Activated CD4-positive, alpha-beta T cell treated with anti-CD3 and anti-CD28 coated beads, Interleukin-2, amount 10 ng/mL, durations not matched to agents 24 days and 14 days (primary cell): ENCODE measurements at regions of chr13 and their contacts with region 1.

Region 1: DNA sequence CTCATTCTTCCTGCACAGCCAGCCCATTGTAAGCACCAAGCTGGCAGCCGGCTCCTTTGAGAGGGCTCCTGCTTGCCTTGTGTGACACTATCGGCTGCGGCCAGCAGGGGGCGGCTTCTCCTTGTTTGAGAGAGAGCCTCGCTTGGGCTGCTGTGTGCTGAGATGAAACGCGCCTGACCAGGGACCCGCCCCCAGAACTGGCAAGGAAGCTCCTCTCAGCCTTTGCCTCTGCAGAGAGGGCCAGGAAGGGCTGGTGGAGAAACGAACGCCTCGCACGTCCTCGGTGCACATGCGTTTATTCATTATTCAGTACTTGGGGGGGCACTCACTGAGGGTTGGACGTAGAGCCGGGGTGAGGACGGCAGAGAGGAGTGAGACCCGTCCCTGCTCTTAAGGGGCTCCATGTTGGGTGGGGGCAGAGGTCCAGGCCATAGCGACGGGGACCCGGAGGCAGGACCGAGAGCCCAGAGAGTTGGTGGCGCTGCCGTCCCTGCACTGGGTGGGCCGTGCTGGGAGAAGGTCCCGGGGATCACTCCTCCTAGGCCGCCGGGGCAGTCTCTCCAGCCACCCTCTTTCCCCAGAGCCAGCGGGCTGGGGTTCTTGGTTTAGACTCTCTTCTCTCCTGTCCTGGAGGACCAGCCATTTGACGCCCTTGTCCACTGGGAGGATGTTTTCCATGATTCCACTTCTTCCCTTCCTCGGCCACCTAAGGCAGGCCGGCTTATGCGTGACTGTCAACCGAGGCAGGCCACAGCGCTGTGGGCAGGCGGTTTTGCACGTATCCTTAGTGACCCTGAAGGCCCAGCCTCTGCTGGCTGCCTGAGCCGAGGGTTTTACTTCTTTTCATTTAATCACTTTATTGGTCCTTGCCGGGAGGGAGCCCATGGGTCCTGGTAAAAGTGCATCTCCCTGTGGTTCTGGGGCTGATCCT is 174.5 kb downstream of the KATNAL1 start:
- DNase-seq: peak; percentile 99
- H3K4me3 Mint-ChIP-seq: peak overlapping the region; percentile 19
- H3K27ac Mint-ChIP-seq: peak overlapping the region; percentile 59
- H3K4me1 Mint-ChIP-seq: peaks cover 19% of the 10 kb centered on the region
- H3K27me3 Mint-ChIP-seq: no peaks in the 10 kb centered on the region

Region 2: DNA sequence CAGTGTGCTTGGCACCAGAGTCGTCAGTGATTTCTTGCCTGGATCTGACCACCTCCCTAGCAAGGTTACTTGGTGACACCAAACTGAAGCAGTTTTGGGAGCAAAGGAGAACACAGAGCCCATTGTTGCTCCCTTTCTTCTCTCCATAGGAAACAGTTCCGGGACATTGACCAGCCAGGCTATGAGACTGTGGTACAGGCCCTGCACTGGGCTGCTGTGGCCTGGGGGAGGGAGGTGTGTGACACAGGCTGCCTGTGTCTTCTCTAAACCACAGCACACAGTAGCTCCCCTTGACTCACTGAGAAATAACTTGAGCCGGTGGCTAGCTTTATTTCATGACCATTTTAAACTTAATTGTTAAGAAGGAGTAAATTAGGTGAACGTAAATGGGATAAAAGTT is 67.7 kb before region 1 on chr13:
- intact Hi-C with region 1: no loop called
- DNase-seq: no peak
- H3K4me3 Mint-ChIP-seq: no peak overlapping the region
- H3K27ac Mint-ChIP-seq: no peak overlapping the region
- H3K4me1 Mint-ChIP-seq: no peaks in the 10 kb centered on the region
- H3K27me3 Mint-ChIP-seq: peaks cover 10% of the 10 kb centered on the region

Region 3: GRCh38 chr13:30158774-30159445 is 26.0 kb after region 1 on chr13:
- intact Hi-C with region 1: loop called (anchors 1 kb)
- DNase-seq: peak; percentile 75
- H3K4me3 Mint-ChIP-seq: peak overlapping the region; percentile 77
- H3K27ac Mint-ChIP-seq: peak overlapping the region; percentile 91
- H3K4me1 Mint-ChIP-seq: peaks cover 42% of the 10 kb centered on the region
- H3K27me3 Mint-ChIP-seq: peaks cover 2% of the 10 kb centered on the region

Region 4: GRCh38 chr13:30172593-30173302 is 39.9 kb after region 1 on chr13:
- intact Hi-C with region 1: no loop called
- DNase-seq: no peak
- H3K4me3 Mint-ChIP-seq: no peak overlapping the region
- H3K27ac Mint-ChIP-seq: no peak overlapping the region
- H3K4me1 Mint-ChIP-seq: peaks cover 29% of the 10 kb centered on the region
- H3K27me3 Mint-ChIP-seq: no peaks in the 10 kb centered on the region

Region 5: DNA sequence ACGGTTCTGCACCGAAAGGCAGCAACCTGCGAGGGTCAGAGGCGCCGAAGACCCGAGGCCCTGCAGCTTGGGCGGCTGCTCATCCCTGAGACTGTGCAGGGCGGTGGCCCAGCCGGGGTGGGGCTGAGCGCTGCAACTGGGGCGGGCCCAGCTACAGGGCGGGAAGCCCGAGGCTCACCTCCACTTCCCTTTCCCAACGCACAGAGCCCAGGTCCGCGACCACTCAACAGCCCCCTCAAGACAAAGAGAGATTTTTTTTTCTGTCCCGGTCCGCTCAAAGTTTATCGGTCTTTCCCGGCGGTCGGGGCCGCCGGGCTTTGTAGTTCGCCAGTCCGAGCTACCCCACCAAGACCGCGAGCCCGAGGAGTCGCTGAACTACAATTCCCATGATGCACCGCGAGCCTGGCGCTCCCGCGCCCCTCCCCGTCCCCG is 173.9 kb after region 1 on chr13:
- intact Hi-C with region 1: loop called (anchors 5 kb)
- DNase-seq: peak; percentile 98
- H3K4me3 Mint-ChIP-seq: peak overlapping the region; percentile 89
- H3K27ac Mint-ChIP-seq: peak overlapping the region; percentile 87
- H3K4me1 Mint-ChIP-seq: peaks cover 46% of the 10 kb centered on the region
- H3K27me3 Mint-ChIP-seq: no peaks in the 10 kb centered on the region

Region 6: GRCh38 chr13:30334663-30335386 is 201.9 kb after region 1 on chr13:
- intact Hi-C with region 1: loop called (anchors 1 kb)
- DNase-seq: peak; percentile 83
- H3K4me3 Mint-ChIP-seq: no peak overlapping the region
- H3K27ac Mint-ChIP-seq: no peak overlapping the region
- H3K4me1 Mint-ChIP-seq: peaks cover 6% of the 10 kb centered on the region
- H3K27me3 Mint-ChIP-seq: no peaks in the 10 kb centered on the region

Region 7: DNA sequence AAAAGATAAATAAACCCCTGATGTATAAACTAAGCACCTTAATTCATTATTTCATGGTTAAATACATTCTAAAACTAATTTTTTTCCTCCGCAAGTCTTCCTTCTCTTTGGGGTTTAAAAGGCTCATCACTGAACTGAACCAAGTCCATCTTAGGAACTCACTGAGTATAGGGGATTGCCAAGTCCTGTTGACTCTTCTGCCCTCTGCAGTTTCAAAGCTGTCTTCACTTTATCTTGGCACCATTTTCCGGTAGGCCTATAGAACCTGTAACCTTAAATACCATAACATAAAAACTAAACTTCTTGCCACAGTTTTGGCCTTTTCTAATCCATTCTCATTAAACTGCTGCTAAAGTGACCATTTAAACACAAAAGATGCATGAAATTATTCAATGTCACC is 418.3 kb after region 1 on chr13:
- intact Hi-C with region 1: loop called (anchors 5 kb)
- DNase-seq: peak; percentile 72
- H3K4me3 Mint-ChIP-seq: no peak overlapping the region
- H3K27ac Mint-ChIP-seq: no peak overlapping the region
- H3K4me1 Mint-ChIP-seq: peaks cover 2% of the 10 kb centered on the region
- H3K27me3 Mint-ChIP-seq: peaks cover 2% of the 10 kb centered on the region

Region 8: DNA sequence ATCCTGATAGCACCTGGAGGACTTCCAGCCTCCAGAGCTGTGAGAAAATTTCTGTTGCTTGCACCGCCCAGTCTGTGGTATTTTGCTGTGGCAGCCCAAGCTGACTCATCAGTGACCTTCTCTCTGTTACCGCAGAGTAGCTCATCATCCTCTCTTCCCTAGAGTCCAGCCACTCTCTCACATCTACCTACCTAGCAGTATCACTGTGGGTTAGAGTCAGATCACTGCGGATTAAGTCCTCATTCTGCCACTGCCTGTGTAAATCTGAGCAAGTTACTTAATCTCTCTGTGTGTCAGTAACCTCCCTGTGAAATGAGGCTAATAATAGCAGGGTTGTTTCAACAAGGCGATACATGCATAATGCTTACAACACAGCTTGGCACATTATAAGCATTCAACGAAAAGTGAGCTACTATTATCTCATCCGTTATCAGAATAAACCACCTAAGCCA is 444.5 kb after region 1 on chr13:
- intact Hi-C with region 1: loop called (anchors 5 kb)
- DNase-seq: peak; percentile 76
- H3K4me3 Mint-ChIP-seq: no peak overlapping the region
- H3K27ac Mint-ChIP-seq: no peak overlapping the region
- H3K4me1 Mint-ChIP-seq: peaks cover 26% of the 10 kb centered on the region
- H3K27me3 Mint-ChIP-seq: peaks cover 16% of the 10 kb centered on the region

Region 9: GRCh38 chr13:30802953-30803478 is 670.1 kb after region 1 on chr13:
- intact Hi-C with region 1: loop called (anchors 5 kb)
- DNase-seq: peak; percentile 94
- H3K4me3 Mint-ChIP-seq: peak overlapping the region; percentile 65
- H3K27ac Mint-ChIP-seq: no peak overlapping the region
- H3K4me1 Mint-ChIP-seq: peaks cover 18% of the 10 kb centered on the region
- H3K27me3 Mint-ChIP-seq: no peaks in the 10 kb centered on the region